ENCODE measurements at regions of chr5 and their contacts with region 1.

Region 1: DNA sequence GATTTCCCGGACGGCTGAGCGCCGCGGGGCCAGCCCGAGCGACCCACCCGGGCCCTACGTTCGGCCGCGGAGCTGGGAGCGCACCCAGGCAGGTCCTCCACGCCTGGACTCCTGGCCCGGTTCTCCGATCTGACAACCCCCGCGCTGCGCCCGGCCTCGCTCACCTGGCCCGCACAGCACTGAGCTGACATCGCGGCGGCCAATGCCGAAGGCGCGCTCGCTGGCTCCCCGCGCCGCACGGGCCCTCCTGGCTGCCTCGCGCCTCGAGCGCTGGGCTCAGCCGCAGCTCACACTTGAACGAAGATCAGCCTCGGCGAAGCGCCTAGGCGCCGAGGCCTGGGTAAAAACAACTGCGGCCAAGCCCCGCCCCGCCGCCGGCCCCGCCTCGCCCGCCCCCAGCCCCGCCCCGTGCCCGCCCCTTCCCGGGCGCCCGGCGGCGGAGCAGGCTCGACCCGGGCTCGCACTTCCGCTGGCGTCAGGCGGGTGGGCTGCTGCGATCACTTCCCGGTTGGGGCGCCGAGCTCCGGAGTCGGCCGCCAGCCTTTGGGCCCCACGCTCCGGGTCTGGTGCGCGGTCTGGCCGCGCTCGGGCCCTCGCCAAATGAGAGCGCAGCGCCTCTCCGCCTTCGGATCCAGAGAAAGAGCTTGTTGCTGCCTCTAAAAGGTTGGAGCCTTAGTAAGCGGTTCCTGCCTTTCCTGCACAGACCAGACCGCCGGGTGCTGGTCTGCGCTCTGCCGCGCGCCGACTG is at the start of gene SERINC5:
- DNase-seq: peak; percentile 91 to 95 (median 92)
- ATAC-seq: peak; percentile 76 to 95 (median 90)
- H3K4me3 ChIP-seq: peak within 1 kb of the TSS; percentile 58 to 92 (median 80)
- H3K27ac ChIP-seq: peak within 1 kb of the TSS; percentile 88 to 99 (median 96)
- H3K4me1 ChIP-seq: peaks cover 0 to 47% (median 28%) of the 10 kb centered on the region in 12 donors
- H3K27me3 ChIP-seq: no peaks in the 10 kb centered on the region
- CTCF ChIP-seq: peak in 1 of 12 donors; percentile 4
- POLR2A ChIP-seq: peak; percentile 63 to 95
- total RNA-seq, gene SERINC5: 10.9 to 25.9 (median 14.6) TPM

Region 2: DNA sequence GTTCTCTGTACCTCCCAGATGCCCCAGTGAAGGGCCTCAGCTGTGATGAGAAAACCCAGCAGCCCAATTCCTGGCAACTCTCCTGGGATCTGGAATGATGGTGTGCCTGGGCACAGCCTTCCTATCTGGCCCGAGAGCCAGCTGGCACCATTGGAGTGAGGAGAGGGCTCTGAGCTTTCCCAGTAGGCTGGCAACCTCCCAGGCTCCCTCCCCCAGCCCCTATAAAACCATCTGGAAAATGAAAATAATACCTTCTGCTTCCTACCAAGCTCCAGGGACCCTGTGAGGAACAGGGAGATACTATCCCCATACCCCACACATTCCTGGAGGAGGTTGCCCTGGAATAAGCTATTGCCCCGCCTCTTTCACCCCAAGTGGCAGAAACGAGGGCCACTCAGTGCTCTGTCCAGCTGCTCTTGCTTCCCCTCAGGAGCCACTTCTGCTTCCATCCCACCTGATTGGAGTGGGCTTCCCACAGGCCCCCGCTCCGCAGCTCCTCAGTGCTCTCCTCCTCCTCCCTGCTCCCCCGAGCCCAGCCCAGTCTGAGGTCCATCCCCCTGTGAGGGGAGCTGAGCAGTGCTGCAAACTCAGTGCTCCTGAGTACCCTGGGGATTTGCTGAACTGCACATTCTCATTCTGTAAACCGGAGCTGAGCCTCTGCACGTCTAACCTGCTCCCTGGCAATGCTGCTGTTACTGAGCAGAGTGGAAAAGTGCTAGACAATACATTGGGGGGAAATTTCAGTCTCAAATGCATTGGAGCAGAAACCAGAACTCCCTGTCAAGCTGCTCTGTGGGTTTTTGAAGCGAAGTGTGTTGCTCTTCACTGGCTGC is 146.0 kb before region 1 on chr5:
- intact Hi-C with region 1: loop called in 2 of 10 experiments (anchors 2 to 5 kb)
- DNase-seq: peak in 4 of 5 donors; percentile 77 to 85 (median 80)
- ATAC-seq: peak; percentile 91 to 97 (median 94)
- H3K4me3 ChIP-seq: peak overlapping the region in 2 of 12 donors; percentile 10 to 26
- H3K27ac ChIP-seq: peak overlapping the region in 9 of 12 donors; percentile 26 to 79 (median 59)
- H3K4me1 ChIP-seq: peaks cover 0 to 33% (median 8%) of the 10 kb centered on the region in 12 donors
- H3K27me3 ChIP-seq: no peaks in the 10 kb centered on the region
- CTCF ChIP-seq: no peak
- POLR2A ChIP-seq: no peak

Region 3: DNA sequence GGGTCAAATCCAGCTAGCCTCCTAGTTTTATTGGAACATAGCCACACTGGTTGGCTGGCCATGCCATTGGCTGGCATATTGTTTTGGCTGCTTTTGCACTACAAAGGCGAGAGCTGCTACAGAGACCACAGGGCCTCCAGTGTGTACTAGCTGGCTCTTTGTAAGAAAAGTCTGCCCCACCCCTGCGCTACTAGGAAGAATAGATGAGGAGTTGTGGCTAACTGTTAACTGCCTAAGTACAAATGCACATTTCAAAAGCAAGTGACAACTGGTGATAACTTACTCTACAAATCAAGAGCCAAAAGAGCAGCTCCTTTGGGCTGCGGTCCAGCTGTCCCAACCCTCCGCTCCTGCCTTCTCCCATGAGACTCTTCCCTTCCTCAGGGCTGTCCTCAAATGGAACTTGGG is 63.9 kb before region 1 on chr5:
- intact Hi-C with region 1: loop called in 9 of 10 experiments (anchors 2 to 10 kb)
- DNase-seq: peak; percentile 55 to 73 (median 62)
- ATAC-seq: peak; percentile 44 to 73 (median 64)
- H3K4me3 ChIP-seq: peak overlapping the region in 5 of 12 donors; percentile 1 to 22 (median 9)
- H3K27ac ChIP-seq: peak overlapping the region; percentile 67 to 90 (median 80)
- H3K4me1 ChIP-seq: peaks cover 0 to 76% (median 55%) of the 10 kb centered on the region in 12 donors
- H3K27me3 ChIP-seq: no peaks in the 10 kb centered on the region
- CTCF ChIP-seq: no peak
- POLR2A ChIP-seq: no peak

Region 4: GRCh38 chr5:80216753-80217596 is 38.9 kb before region 1 on chr5:
- intact Hi-C with region 1: loop called in 2 of 10 experiments (anchors 2 to 5 kb)
- DNase-seq: peak; percentile 72 to 90 (median 84)
- ATAC-seq: peak; percentile 96 to 97 (median 96)
- H3K4me3 ChIP-seq: peak overlapping the region in 5 of 12 donors; percentile 3 to 34 (median 25)
- H3K27ac ChIP-seq: peak overlapping the region; percentile 32 to 83 (median 65)
- H3K4me1 ChIP-seq: peaks cover 0 to 73% (median 32%) of the 10 kb centered on the region in 12 donors
- H3K27me3 ChIP-seq: no peaks in the 10 kb centered on the region
- CTCF ChIP-seq: no peak
- POLR2A ChIP-seq: no peak

Region 5: GRCh38 chr5:80407735-80408482 is 152.0 kb after region 1 on chr5 and contains the start of gene ZFYVE16:
- intact Hi-C with region 1: loop called in 1 of 10 experiments (anchors 10 kb)
- DNase-seq: peak; percentile 98 to 99 (median 99)
- ATAC-seq: peak; percentile 96 to 98 (median 97)
- H3K4me3 ChIP-seq: peak within 1 kb of the TSS; percentile 56 to 94 (median 77)
- H3K27ac ChIP-seq: peak within 1 kb of the TSS; percentile 89 to 99 (median 96)
- H3K4me1 ChIP-seq: peaks cover 0 to 52% (median 30%) of the 10 kb centered on the region in 12 donors
- H3K27me3 ChIP-seq: no peaks in the 10 kb centered on the region
- CTCF ChIP-seq: peak in 8 of 12 donors; percentile 9 to 48 (median 28)
- POLR2A ChIP-seq: peak; percentile 44 to 92
- total RNA-seq, gene ZFYVE16: 16.1 to 53.2 (median 39.2) TPM

Region 6: DNA sequence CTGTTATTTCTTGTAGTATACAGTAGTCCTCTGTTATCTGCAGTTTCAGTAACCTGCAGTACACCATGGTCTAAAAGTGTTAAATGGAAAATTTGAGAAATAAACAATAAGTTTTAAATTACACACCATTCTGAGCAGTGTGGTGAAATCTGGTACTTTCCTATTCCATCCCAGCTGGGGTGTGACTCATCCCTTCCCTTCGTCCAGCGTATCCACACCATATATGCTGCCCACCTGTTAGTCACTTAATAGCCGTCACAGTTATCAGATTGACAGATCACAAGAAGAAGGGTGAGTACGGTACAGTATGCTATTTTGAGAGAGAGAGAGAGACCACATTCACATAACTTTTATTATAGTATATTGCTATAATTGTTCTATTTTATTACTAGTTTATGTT is 260.9 kb after region 1 on chr5:
- intact Hi-C with region 1: no loop called
- DNase-seq: no peak
- ATAC-seq: no peak
- H3K4me3 ChIP-seq: no peak overlapping the region
- H3K27ac ChIP-seq: no peak overlapping the region
- H3K4me1 ChIP-seq: no peaks in the 10 kb centered on the region
- H3K27me3 ChIP-seq: no peaks in the 10 kb centered on the region
- CTCF ChIP-seq: no peak
- POLR2A ChIP-seq: no peak

Measured in heart left ventricle (tissue), 16 donors.